HCT116 (cell line): ENCODE measurements at regions of chr10 and their contacts with region 1.

Region 1: GRCh38 chr10:98309366-98310355 is 41.7 kb upstream of the LOXL4 start:
- DNase-seq: peak; percentile 49
- ATAC-seq: peak; percentile 98
- H3K4me3 ChIP-seq: no peak overlapping the region
- H3K27ac ChIP-seq: no peak overlapping the region
- H3K4me1 ChIP-seq: peaks cover 2 to 13% of the 10 kb centered on the region in 2 experiments; a peak in 2 of 4 replicates
- H3K27me3 ChIP-seq: no peaks in the 10 kb centered on the region
- CTCF ChIP-seq: peak; percentile 81 to 95 (median 94)
- POLR2A ChIP-seq: no peak
- RAD21 ChIP-seq: peak; percentile 100

Region 2: DNA sequence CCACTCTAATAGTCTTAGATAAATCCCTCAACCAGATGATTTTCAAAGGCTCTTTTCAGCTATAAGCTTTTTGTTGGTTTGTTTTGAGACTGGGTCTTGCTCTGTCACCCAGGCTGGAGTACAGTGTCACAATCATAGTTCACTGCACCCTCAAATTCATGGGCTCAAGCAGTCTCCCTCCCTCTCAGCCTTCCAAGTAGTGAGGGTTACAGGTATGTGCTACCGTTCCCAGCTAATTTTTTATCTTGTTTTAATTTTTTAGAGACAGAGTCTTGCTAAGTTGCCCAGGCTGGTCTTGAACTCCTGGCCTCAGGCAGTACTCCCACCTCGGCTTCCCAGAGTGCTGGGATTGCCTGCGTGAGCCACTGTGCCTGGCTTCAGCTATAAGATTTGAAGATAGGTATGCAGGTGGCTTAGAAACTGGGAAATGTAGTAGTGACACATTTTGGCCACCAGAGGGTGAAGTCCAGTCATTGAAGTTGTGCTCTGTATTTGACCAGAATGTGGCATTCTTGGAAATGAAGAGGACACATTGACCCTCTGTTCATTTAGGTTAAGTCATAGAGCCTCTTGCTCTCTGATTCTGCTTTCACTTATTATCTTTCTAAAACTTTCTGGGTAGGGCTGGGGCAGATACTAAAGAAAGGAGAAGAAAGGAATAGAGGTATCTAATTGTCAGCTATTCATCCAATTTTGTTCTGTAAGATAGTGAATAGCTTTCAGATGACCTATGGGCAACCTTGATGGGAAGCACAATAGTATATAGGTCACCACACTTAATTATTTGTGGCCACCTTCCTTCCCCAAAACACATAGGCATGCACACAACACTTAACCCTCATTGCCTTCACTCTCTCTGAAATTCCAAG is 139.2 kb before region 1 on chr10:
- CTCF ChIA-PET with region 1: interaction called, 32 read pairs
- POLR2A ChIA-PET with region 1: no interaction called
- RAD21 ChIA-PET with region 1: interaction called in 1 of 2 experiments, 9 read pairs
- intact Hi-C with region 1: loop called (anchors 1 kb)
- DNase-seq: peak; percentile 40
- ATAC-seq: peak; percentile 98
- H3K4me3 ChIP-seq: no peak overlapping the region
- H3K27ac ChIP-seq: no peak overlapping the region
- H3K4me1 ChIP-seq: no peaks in the 10 kb centered on the region
- H3K27me3 ChIP-seq: no peaks in the 10 kb centered on the region
- CTCF ChIP-seq: peak; percentile 56 to 76 (median 75); a peak in 5 of 6 replicates
- POLR2A ChIP-seq: no peak
- RAD21 ChIP-seq: peak; percentile 59

Region 3: DNA sequence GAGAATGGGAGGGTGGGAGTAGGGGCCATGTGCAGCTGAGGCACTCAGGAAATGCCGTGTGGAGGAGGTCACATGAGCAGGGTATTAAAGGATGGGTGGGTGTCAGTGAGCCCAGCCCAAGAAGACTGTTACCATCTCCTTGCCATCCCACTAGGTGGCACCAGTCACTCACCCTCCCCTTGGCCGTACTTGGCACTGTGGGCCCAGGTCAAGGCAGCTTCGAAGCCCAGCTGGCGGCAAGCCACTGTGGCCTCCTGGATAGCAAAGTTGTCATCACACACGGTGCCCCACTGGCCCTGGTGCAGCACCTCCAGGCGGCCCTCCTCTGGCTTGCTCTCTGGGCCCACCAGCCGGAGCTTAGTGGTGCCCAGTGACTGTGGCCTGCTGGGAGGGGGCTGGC is 47.1 kb before region 1 on chr10:
- CTCF ChIA-PET with region 1: interaction called, 36 read pairs
- POLR2A ChIA-PET with region 1: interaction called, 3 read pairs
- RAD21 ChIA-PET with region 1: interaction called, 8 to 9 read pairs
- intact Hi-C with region 1: loop called (anchors 1 kb)
- DNase-seq: peak; percentile 42
- ATAC-seq: peak; percentile 82
- H3K4me3 ChIP-seq: no peak overlapping the region
- H3K27ac ChIP-seq: no peak overlapping the region
- H3K4me1 ChIP-seq: peaks cover 18 to 46% of the 10 kb centered on the region in 2 experiments
- H3K27me3 ChIP-seq: no peaks in the 10 kb centered on the region
- CTCF ChIP-seq: peak in 2 of 3 experiments; percentile 67 to 69; a peak in 4 of 6 replicates
- POLR2A ChIP-seq: no peak
- RAD21 ChIP-seq: no peak

Region 4: DNA sequence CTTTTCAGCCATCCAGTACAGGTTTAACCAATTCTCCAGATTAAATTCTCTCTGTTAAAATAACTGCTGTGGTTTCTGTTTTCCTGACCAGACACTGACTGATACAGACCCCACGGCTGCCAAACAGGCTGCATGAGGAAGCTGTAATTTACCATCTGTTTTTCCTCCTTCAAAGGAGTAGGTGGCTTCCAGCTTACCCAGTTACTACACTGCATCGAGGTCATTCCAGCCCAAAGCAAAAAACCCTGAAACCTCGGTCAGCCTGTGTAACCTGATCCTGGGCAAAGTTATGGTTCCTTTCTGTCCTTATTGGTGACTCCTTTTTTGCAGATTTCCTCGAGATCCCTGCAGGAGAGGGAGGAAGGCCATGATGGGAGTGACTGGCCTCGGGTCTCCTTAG is 13.8 kb before region 1 on chr10:
- CTCF ChIA-PET with region 1: interaction called, 17 read pairs
- POLR2A ChIA-PET with region 1: no interaction called
- RAD21 ChIA-PET with region 1: interaction called in 1 of 2 experiments, 4 read pairs
- intact Hi-C with region 1: no loop called
- DNase-seq: no peak
- ATAC-seq: no peak; the same call in 1 of the 2 replicates
- H3K4me3 ChIP-seq: no peak overlapping the region
- H3K27ac ChIP-seq: no peak overlapping the region
- H3K4me1 ChIP-seq: peaks cover 17% of the 10 kb centered on the region in 2 experiments
- H3K27me3 ChIP-seq: peaks cover 55% of the 10 kb centered on the region
- CTCF ChIP-seq: no peak
- POLR2A ChIP-seq: no peak
- RAD21 ChIP-seq: no peak

Region 5: GRCh38 chr10:98331885-98332284 is 22.2 kb after region 1 on chr10:
- CTCF ChIA-PET with region 1: interaction called, 13 read pairs
- POLR2A ChIA-PET with region 1: no interaction called
- RAD21 ChIA-PET with region 1: no interaction called
- intact Hi-C with region 1: no loop called
- DNase-seq: peak; percentile 68
- ATAC-seq: peak; percentile 97
- H3K4me3 ChIP-seq: no peak overlapping the region
- H3K27ac ChIP-seq: no peak overlapping the region
- H3K4me1 ChIP-seq: peaks cover 0 to 7% of the 10 kb centered on the region in 2 experiments; a peak in 1 of 4 replicates
- H3K27me3 ChIP-seq: peaks cover 5% of the 10 kb centered on the region; the same call in 1 of the 2 replicates
- CTCF ChIP-seq: peak; percentile 87 to 98 (median 97)
- POLR2A ChIP-seq: no peak
- RAD21 ChIP-seq: peak; percentile 93